IMR-90 (cell line): ENCODE measurements at regions of chr9 and their contacts with region 1.

Region 1: GRCh38 chr9:35882263-35882848 is 12.2 kb upstream of the OR13J1 start:
- DNase-seq: peak; percentile 71
- ATAC-seq: peak; percentile 94
- H3K4me3 ChIP-seq: no peak overlapping the region
- H3K27ac ChIP-seq: no peak overlapping the region
- H3K4me1 ChIP-seq: no peaks in the 10 kb centered on the region
- H3K27me3 ChIP-seq: peaks cover 5% of the 10 kb centered on the region
- CTCF ChIP-seq: peak; percentile 93
- POLR2A ChIP-seq: no peak
- RAD21 ChIP-seq: peak; percentile 88

Region 2: DNA sequence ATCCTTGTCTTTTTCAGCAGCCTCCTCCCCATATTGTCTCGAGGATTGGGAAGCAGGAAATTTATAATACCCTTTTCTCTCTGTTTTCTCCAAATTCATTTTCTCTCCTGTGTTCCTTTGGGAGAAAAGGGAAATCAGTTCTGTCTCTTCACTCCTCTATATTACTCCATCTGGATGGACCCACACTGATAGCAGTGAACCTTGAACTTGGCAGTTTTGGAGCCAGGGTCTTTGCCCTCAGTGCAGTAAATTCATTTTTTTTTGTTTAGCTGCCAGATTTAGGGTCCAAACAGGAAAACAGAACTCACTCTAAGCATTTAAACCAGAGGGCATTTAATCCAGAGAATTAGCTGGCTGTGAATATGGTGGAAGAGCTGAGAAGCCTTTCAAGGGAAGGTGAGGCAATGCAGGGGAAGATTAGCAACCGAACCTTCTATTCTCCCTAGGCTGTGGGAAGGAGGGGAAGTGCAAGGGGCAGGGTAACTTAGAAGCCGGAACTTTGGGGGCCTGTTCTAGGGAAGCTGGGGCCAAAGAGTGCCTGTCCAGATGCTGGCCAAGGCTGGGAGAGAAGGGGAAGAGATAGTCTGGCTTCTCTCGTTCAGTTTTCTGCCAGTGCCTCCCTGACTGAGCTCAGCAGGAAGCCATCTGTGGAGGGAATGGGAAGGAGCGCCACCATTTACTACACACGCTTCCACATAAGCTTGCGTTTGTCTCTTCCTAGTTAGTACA is 107.3 kb before region 1 on chr9:
- CTCF ChIA-PET with region 1: no interaction called
- POLR2A ChIA-PET with region 1: no interaction called
- dilution Hi-C with region 1: no loop called
- in situ Hi-C with region 1: loop called (anchors 5 kb)
- intact Hi-C with region 1: no loop called
- DNase-seq: no peak
- ATAC-seq: no peak
- H3K4me3 ChIP-seq: no peak overlapping the region
- H3K27ac ChIP-seq: no peak overlapping the region
- H3K4me1 ChIP-seq: peaks cover 1% of the 10 kb centered on the region; the same call in 1 of the 2 replicates
- H3K27me3 ChIP-seq: peaks cover 27% of the 10 kb centered on the region
- CTCF ChIP-seq: no peak
- POLR2A ChIP-seq: no peak
- RAD21 ChIP-seq: no peak

Region 3: DNA sequence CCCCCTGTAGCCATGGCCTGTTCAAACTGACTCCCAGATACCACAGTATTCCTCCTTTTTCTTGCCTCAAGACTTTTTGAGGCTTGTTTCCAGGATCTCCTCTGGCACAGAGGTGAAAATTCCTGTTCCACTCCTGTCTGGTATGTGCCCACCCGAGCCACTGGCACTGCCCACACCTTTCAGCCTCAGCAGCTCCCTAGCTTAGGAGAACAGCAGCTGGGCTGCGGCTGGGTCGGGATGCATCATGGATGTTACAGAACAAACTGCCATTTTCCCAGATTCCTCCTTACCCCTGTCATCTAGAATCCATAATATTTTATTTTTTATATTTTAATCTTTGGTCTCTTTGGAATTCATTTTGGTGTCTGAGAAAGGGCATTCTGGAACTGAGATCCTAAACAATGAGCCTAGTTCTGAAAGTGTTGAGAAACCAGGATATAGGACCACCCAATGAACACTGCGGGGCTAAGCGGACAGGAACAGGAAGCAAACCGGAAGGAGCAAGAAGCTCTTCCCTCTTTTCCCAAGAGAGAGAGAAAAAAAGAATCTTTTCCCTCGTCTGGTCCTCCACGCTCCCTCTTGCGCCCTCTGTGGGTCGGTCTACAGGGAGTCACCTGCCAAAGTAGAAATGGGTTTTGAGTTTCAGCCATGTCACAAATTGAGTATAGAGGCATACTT is 63.1 kb after region 1 on chr9:
- CTCF ChIA-PET with region 1: no interaction called
- POLR2A ChIA-PET with region 1: no interaction called
- dilution Hi-C with region 1: no loop called
- in situ Hi-C with region 1: loop called (anchors 10 kb)
- intact Hi-C with region 1: no loop called
- DNase-seq: peak; percentile 85
- ATAC-seq: peak; percentile 90
- H3K4me3 ChIP-seq: no peak overlapping the region; the same call in 1 of the 2 replicates
- H3K27ac ChIP-seq: peak overlapping the region; percentile 39
- H3K4me1 ChIP-seq: peaks cover 9% of the 10 kb centered on the region
- H3K27me3 ChIP-seq: no peaks in the 10 kb centered on the region
- CTCF ChIP-seq: peak; percentile 90
- POLR2A ChIP-seq: no peak
- RAD21 ChIP-seq: peak; percentile 84

Region 4: GRCh38 chr9:36023260-36024048 is 141.1 kb after region 1 on chr9:
- CTCF ChIA-PET with region 1: no interaction called
- POLR2A ChIA-PET with region 1: no interaction called
- dilution Hi-C with region 1: no loop called
- in situ Hi-C with region 1: no loop called
- intact Hi-C with region 1: no loop called
- DNase-seq: peak; percentile 78
- ATAC-seq: peak; percentile 65
- H3K4me3 ChIP-seq: no peak overlapping the region
- H3K27ac ChIP-seq: no peak overlapping the region
- H3K4me1 ChIP-seq: peaks cover 16% of the 10 kb centered on the region
- H3K27me3 ChIP-seq: no peaks in the 10 kb centered on the region
- CTCF ChIP-seq: peak; percentile 79
- POLR2A ChIP-seq: no peak
- RAD21 ChIP-seq: peak; percentile 90